Activated B cell treated with CpG ODN at 0.5 μM for 24 hours (primary cell): ENCODE measurements at regions of chr15 and their contacts with region 1.

Region 1: GRCh38 chr15:55221090-55222011 is 24.6 kb upstream of the RSL24D1 start:
- DNase-seq: no peak
- ATAC-seq: peak; percentile 59
- H3K4me3 Mint-ChIP-seq: peak overlapping the region; percentile 49
- H3K27ac Mint-ChIP-seq: peak overlapping the region; percentile 47
- H3K4me1 Mint-ChIP-seq: peaks cover 67% of the 10 kb centered on the region
- H3K27me3 Mint-ChIP-seq: no peaks in the 10 kb centered on the region
- CTCF ChIP-seq: no peak

Region 2: DNA sequence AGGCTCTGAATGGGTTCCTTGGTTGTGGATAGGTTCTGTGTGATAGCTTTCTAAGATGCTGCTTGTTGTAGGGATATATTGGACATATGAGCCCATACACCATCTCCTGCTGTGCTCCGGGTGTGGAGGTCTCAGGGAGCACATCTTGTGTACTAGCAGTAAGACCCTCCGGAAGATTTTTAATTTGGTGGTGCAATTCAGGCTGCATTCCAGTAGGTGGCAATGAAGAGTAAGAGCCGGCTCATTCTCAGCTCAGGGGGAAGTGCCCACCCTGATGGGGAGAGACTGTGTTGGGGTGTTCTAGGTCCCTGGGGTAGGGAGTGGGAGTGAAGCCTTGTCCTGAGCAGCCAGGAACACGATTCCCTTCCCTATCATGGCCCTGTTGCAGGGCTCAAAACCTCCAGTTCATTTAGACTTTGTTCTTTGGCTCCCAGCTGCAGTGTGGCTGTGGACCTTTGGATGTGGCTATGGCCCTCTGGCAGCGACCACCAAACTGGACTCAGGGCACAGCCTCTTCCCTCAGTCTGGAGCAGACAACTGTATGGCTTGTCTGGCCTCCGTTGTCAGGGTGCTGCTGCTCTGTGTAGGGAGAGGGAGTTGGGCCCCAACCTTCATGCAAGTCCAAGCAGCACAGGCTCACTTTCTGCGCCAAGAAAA is 1138.4 kb before region 1 on chr15:
- CTCF ChIA-PET with region 1: no interaction called
- POLR2A ChIA-PET with region 1: no interaction called
- intact Hi-C with region 1: loop called (anchors 5 kb)
- DNase-seq: no peak
- ATAC-seq: no peak
- H3K4me3 Mint-ChIP-seq: no peak overlapping the region
- H3K27ac Mint-ChIP-seq: no peak overlapping the region
- H3K4me1 Mint-ChIP-seq: no peaks in the 10 kb centered on the region
- H3K27me3 Mint-ChIP-seq: no peaks in the 10 kb centered on the region
- CTCF ChIP-seq: no peak

Region 3: GRCh38 chr15:55183679-55184078 is 37.7 kb before region 1 on chr15:
- CTCF ChIA-PET with region 1: no interaction called
- POLR2A ChIA-PET with region 1: no interaction called
- intact Hi-C with region 1: loop called (anchors 5 kb)
- DNase-seq: no peak
- ATAC-seq: no peak
- H3K4me3 Mint-ChIP-seq: no peak overlapping the region
- H3K27ac Mint-ChIP-seq: no peak overlapping the region
- H3K4me1 Mint-ChIP-seq: peaks cover 10% of the 10 kb centered on the region
- H3K27me3 Mint-ChIP-seq: no peaks in the 10 kb centered on the region
- CTCF ChIP-seq: no peak

Region 4: GRCh38 chr15:55255714-55256113 is 34.4 kb after region 1 on chr15:
- CTCF ChIA-PET with region 1: interaction called, 4 read pairs
- POLR2A ChIA-PET with region 1: no interaction called
- intact Hi-C with region 1: loop called (anchors 5 kb)
- DNase-seq: no peak
- ATAC-seq: peak; percentile 47
- H3K4me3 Mint-ChIP-seq: peak overlapping the region; percentile 74
- H3K27ac Mint-ChIP-seq: peak overlapping the region; percentile 86
- H3K4me1 Mint-ChIP-seq: peaks cover 64% of the 10 kb centered on the region
- H3K27me3 Mint-ChIP-seq: no peaks in the 10 kb centered on the region
- CTCF ChIP-seq: no peak

Region 5: GRCh38 chr15:55290528-55291057 is 69.2 kb after region 1 on chr15:
- CTCF ChIA-PET with region 1: interaction called, 32 read pairs
- POLR2A ChIA-PET with region 1: interaction called, 3 read pairs
- intact Hi-C with region 1: loop called (anchors 1 kb)
- DNase-seq: peak; percentile 75
- ATAC-seq: peak; percentile 81
- H3K4me3 Mint-ChIP-seq: peak overlapping the region; percentile 89
- H3K27ac Mint-ChIP-seq: peak overlapping the region; percentile 83
- H3K4me1 Mint-ChIP-seq: peaks cover 22% of the 10 kb centered on the region
- H3K27me3 Mint-ChIP-seq: no peaks in the 10 kb centered on the region
- CTCF ChIP-seq: peak; percentile 78

Region 6: DNA sequence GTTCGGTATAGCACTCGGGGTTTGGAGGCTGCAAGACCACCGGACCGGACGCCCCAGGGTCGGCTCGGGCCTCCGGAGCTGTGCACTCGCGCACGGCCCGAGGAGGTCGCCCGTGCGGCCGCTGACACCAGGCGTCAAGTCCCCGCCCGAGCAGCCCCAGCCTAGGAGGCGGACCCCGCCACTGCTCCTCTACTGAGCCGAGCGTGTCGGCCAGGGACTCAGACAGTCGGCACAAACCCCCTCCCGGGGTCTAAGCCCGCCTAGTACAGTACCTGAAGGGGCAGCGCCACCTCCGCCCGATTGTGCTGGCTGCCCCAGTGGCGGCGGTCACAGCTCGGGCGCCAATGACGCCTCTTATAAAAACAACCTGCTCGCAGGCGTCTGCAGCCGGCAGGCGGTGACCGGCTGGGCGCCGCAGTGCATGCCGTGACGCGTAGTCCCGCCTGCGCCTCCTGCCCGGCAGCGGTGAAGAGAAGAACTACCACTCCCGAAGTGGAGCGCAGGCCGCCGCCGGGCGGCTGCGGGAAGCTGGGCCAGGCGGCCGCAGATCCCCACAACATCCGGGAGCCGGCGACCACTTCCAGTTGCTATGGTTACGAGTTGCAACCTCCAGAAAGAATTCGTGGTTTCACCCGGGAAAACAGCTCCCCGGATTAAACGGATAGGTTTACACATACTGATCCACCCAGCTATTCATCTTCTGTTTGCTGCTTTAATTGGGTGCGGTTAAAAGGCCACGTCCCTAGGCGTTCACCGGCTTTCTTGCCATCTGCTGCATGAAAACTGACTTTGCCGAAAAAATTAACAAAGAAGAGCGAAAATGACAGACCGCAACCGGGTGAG is 186.8 kb after region 1 on chr15 and contains the starts of genes CCPG1 and PIERCE2:
- CTCF ChIA-PET with region 1: interaction called, 6 read pairs
- POLR2A ChIA-PET with region 1: interaction called, 7 read pairs
- intact Hi-C with region 1: loop called (anchors 2 kb)
- DNase-seq: peak; percentile 85
- ATAC-seq: peak; percentile 93
- H3K4me3 Mint-ChIP-seq: peak within 1 kb of the TSS; percentile 88
- H3K27ac Mint-ChIP-seq: peak within 1 kb of the TSS; percentile 88
- H3K4me1 Mint-ChIP-seq: peaks cover 27% of the 10 kb centered on the region
- H3K27me3 Mint-ChIP-seq: no peaks in the 10 kb centered on the region
- CTCF ChIP-seq: peak; percentile 46
- total RNA-seq, gene CCPG1: 11.9 and 16.2 TPM in 2 replicates
- total RNA-seq, gene PIERCE2: 0.55 and 1.1 TPM in 2 replicates